Transverse colon (tissue), 4 donors: ENCODE measurements at regions of chr11 and their contacts with region 1.

Region 1: DNA sequence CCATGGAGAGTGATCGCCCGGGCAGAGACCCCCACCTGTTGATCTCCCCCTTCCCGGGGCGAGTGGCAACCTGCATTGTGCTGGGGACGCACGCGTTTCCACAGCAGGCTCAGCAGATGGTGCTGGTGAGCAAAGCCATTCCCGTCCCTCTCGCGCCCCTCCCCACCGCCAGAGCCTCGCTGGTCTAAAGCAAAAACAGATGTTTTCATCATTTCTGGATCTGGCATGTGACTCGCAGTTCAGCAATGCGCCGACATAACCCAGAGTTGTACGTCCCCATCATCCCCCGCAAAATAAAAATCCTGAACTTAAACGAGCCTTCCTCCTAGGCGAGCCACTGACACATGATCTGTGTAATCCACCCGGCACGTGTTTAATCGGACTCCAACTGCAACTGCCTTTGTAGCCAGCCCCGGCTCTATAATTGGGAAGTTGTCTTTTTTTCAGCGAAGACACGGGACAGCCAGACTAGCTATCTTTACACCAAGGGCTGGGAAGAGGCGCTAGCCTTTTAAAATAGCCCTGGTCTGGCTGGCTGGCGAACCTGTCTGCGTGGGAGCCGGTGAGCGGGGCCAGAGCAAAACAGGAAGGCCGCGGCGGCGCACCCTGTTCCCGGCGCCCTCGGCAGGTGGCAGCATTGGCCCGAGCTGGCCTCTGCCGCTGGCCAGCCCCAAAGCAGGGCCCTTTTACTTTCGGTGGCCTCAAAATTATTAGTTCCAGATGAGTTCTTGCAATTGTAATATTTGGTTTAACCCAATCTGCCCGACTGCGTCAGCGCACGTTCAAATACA is 203.0 kb upstream of the SORL1-AS1 start:
- DNase-seq: peak; percentile 81
- H3K4me3 ChIP-seq: peak overlapping the region; percentile 15 to 44 (median 22)
- H3K27ac ChIP-seq: peak overlapping the region; percentile 77 to 91 (median 82)
- H3K4me1 ChIP-seq: peaks cover 0 to 18% (median 6%) of the 10 kb centered on the region in 4 donors
- H3K27me3 ChIP-seq: no peaks in the 10 kb centered on the region
- CTCF ChIP-seq: peak; percentile 78 to 87 (median 85)
- EP300 ChIP-seq: no peak
- POLR2A ChIP-seq: no peak

Region 2: GRCh38 chr11:121437018-121437685 is 218.6 kb before region 1 on chr11:
- in situ Hi-C with region 1: no loop called
- intact Hi-C with region 1: no loop called
- DNase-seq: no peak
- H3K4me3 ChIP-seq: no peak overlapping the region
- H3K27ac ChIP-seq: no peak overlapping the region
- H3K4me1 ChIP-seq: no peaks in the 10 kb centered on the region
- H3K27me3 ChIP-seq: no peaks in the 10 kb centered on the region
- CTCF ChIP-seq: no peak
- EP300 ChIP-seq: no peak
- POLR2A ChIP-seq: no peak

Region 3: GRCh38 chr11:122101625-122102291 is 446.0 kb after region 1 on chr11:
- in situ Hi-C with region 1: loop called in 2 of 4 experiments (anchors 10 kb)
- intact Hi-C with region 1: loop called (anchors 1 kb)
- DNase-seq: peak; percentile 28
- H3K4me3 ChIP-seq: peak overlapping the region; percentile 14 to 41 (median 32)
- H3K27ac ChIP-seq: peak overlapping the region; percentile 69 to 87 (median 75)
- H3K4me1 ChIP-seq: peaks cover 0 to 5% (median 0%) of the 10 kb centered on the region in 4 donors
- H3K27me3 ChIP-seq: peaks cover 42% of the 10 kb centered on the region
- CTCF ChIP-seq: peak in 4 of 5 experiments; percentile 10 to 46 (median 23)
- EP300 ChIP-seq: no peak
- POLR2A ChIP-seq: no peak

Region 4: GRCh38 chr11:122108192-122108799 is 452.6 kb after region 1 on chr11:
- in situ Hi-C with region 1: loop called in 2 of 4 experiments (anchors 10 kb)
- intact Hi-C with region 1: no loop called
- DNase-seq: no peak
- H3K4me3 ChIP-seq: no peak overlapping the region
- H3K27ac ChIP-seq: no peak overlapping the region
- H3K4me1 ChIP-seq: no peaks in the 10 kb centered on the region
- H3K27me3 ChIP-seq: no peaks in the 10 kb centered on the region
- CTCF ChIP-seq: peak in 3 of 5 experiments; percentile 30 to 37 (median 37)
- EP300 ChIP-seq: no peak
- POLR2A ChIP-seq: no peak

Region 5: DNA sequence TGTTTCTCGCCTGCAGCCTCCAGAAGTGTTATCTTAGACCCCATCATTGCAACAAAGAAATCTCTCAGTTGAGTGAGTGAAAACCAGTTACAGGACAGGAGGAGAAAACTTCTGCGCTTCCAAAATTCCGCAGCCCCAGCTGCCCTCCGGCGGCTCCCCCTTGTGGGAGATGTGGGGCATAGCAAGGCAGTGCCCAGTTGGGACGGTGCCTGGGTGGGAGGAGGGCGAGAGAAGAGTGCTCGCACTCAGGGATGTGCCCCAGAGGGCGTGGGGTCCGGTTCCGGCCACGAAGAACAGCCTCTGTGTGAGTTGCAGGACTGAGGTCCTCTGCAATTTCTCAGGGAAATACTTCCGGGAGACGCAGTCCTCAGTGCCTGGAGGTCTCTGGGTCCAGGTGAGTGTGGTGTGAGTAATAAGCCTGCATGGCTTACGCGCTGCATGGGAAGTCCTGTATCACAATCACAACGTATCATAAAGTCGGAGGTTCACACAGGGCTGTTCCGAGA is 547.3 kb after region 1 on chr11:
- in situ Hi-C with region 1: loop called in 3 of 4 experiments (anchors 10 to 25 kb)
- intact Hi-C with region 1: loop called (anchors 5 kb)
- DNase-seq: peak; percentile 40
- H3K4me3 ChIP-seq: peak overlapping the region in 3 of 4 donors; percentile 18 to 33 (median 19)
- H3K27ac ChIP-seq: peak overlapping the region; percentile 31 to 50 (median 44)
- H3K4me1 ChIP-seq: peaks cover 0 to 24% (median 13%) of the 10 kb centered on the region in 4 donors
- H3K27me3 ChIP-seq: peaks cover 12% of the 10 kb centered on the region
- CTCF ChIP-seq: peak; percentile 78 to 94 (median 91)
- EP300 ChIP-seq: no peak
- POLR2A ChIP-seq: no peak

Region 6: GRCh38 chr11:122215244-122215992 is 559.7 kb after region 1 on chr11:
- in situ Hi-C with region 1: loop called in 3 of 4 experiments (anchors 10 to 25 kb)
- intact Hi-C with region 1: no loop called
- DNase-seq: peak; percentile 48
- H3K4me3 ChIP-seq: no peak overlapping the region
- H3K27ac ChIP-seq: peak overlapping the region in 1 of 4 donors; percentile 23
- H3K4me1 ChIP-seq: peaks cover 0 to 14% (median 3%) of the 10 kb centered on the region in 4 donors
- H3K27me3 ChIP-seq: no peaks in the 10 kb centered on the region
- CTCF ChIP-seq: peak; percentile 65 to 86 (median 80)
- EP300 ChIP-seq: no peak
- POLR2A ChIP-seq: no peak

Region 7: DNA sequence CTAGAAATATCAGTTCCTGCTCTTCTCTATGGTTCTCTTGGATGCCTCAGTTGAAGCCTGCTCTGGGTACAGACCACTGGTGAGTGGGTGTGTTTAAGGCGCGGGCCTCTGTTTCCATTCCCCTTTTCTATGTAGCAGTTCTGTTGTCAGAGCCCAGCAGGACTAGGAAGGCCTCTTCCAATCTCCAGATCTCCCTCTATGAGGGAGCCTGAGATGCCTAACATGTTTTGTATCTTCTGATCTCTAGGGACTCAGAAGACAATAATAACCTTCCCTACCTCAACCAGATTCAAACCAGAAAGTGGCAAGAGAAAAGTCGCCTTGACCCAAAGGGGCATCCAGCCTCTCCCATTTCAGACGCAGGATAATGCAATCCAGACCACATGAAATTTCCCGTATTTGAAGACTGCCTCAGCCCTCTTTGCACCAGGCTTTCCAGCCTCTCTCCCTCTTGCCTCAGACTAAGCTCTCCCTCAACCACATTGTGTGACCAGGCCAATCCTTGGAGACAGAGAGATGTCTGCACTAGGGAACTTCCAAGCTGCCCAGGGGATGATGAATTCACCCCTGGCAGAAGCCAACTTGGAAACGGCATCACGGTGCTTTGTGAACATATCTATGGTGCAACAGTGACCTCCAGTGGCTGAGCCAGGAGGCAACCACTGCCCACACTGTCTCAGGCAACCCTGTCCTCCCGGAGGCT is 849.7 kb after region 1 on chr11:
- in situ Hi-C with region 1: loop called (anchors 10 to 25 kb)
- intact Hi-C with region 1: loop called (anchors 10 kb)
- DNase-seq: peak; percentile 68
- H3K4me3 ChIP-seq: no peak overlapping the region
- H3K27ac ChIP-seq: no peak overlapping the region
- H3K4me1 ChIP-seq: no peaks in the 10 kb centered on the region
- H3K27me3 ChIP-seq: no peaks in the 10 kb centered on the region
- CTCF ChIP-seq: peak; percentile 59 to 71 (median 60)
- EP300 ChIP-seq: no peak
- POLR2A ChIP-seq: no peak